Heart right ventricle (tissue), 16 donors: ENCODE measurements at regions of chr14 and their contacts with region 1.

Region 1: DNA sequence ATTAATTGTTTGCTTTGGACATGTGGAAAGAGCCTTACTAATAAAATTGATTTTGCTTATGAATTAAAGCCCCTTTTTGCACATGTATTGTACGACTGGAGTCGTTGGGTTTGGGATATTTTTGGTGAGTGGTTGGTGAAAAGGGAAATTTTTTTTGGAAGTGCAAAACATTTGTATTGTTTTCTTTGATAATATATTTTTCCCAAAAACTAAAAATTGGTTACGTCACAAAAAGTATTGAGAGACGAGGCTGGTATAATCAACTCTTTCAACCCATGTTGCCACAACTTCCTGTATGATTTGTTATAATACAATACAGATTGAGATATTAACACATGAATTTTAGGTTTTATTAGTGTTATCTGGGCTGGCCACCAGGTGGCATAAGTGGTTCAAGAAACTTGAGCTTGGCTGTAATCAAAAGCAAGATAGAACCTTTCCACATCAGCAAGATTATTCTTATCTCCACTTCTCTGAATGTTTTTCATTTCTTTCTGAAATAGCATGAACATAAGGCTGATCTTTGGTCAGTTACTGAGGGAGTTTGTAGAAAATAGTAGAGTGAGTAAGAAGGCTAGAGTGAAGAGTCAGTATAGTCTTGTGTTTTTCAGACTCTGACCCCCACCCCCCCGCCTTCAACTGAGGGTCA is 8.7 kb downstream of the NGDN start:
- DNase-seq: peak in 1 of 2 donors; percentile 52
- ATAC-seq: peak in 2 of 8 donors; percentile 39 to 64
- H3K4me3 ChIP-seq: no peak overlapping the region
- H3K27ac ChIP-seq: no peak overlapping the region
- H3K4me1 ChIP-seq: peaks cover 0 to 5% (median 0%) of the 10 kb centered on the region in 9 donors
- H3K27me3 ChIP-seq: no peaks in the 10 kb centered on the region
- CTCF ChIP-seq: peak; percentile 54 to 78 (median 70)

Region 2: DNA sequence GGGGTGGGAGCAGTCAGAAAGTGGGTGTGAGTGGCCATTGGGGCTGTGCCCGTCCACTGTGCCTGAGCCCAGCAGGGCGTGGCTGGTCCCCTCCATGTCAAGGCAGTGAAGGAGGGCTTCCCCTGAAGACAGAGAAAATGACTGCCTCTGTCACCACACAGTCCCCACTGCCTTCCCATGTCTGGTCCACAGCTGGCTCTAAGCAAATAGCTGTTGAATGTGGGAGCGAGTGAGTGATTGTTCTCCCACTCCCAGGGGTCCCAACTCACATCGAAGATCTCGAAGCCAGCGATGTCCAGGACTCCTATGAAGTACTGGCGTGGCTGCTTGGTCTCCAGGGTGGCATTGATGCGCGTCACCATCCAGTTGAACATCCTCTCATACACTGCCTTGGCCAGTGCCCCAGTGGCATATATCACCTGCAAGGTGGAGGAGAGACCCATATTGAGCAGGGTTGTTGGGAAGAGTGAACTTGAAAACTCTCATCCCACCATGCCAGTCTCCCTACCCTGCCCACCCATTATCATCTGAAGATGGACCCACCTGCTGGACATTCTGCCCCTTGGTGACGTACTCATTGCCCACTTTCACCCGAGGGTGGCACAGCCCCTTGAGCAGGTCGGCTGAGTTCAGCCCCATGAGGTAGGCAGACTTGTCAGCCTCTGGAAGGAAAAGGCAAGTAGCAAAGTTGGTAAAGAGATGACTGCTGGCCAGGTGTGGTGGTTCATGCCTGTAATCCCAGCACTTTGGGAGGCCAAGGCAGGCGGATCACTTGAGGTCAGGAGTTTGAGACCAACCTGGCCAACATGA is 49.3 kb before region 1 on chr14:
- intact Hi-C with region 1: no loop called
- DNase-seq: peak in 1 of 2 donors; percentile 17
- ATAC-seq: peak in 5 of 8 donors; percentile 1 to 15 (median 7)
- H3K4me3 ChIP-seq: peak overlapping the region in 3 of 10 donors; percentile 3 to 58 (median 47)
- H3K27ac ChIP-seq: peak overlapping the region in 1 of 10 donors; percentile 96
- H3K4me1 ChIP-seq: peaks cover 0 to 3% (median 0%) of the 10 kb centered on the region in 9 donors
- H3K27me3 ChIP-seq: no peaks in the 10 kb centered on the region
- CTCF ChIP-seq: no peak

Region 3: GRCh38 chr14:23539248-23540140 is 61.3 kb after region 1 on chr14:
- intact Hi-C with region 1: loop called in 3 of 10 experiments (anchors 5 to 10 kb)
- DNase-seq: no peak
- ATAC-seq: peak in 7 of 8 donors; percentile 31 to 75 (median 57)
- H3K4me3 ChIP-seq: no peak overlapping the region
- H3K27ac ChIP-seq: no peak overlapping the region
- H3K4me1 ChIP-seq: peaks cover 0 to 11% (median under 1%) of the 10 kb centered on the region in 9 donors
- H3K27me3 ChIP-seq: no peaks in the 10 kb centered on the region
- CTCF ChIP-seq: peak; percentile 43 to 80 (median 71)

Region 4: DNA sequence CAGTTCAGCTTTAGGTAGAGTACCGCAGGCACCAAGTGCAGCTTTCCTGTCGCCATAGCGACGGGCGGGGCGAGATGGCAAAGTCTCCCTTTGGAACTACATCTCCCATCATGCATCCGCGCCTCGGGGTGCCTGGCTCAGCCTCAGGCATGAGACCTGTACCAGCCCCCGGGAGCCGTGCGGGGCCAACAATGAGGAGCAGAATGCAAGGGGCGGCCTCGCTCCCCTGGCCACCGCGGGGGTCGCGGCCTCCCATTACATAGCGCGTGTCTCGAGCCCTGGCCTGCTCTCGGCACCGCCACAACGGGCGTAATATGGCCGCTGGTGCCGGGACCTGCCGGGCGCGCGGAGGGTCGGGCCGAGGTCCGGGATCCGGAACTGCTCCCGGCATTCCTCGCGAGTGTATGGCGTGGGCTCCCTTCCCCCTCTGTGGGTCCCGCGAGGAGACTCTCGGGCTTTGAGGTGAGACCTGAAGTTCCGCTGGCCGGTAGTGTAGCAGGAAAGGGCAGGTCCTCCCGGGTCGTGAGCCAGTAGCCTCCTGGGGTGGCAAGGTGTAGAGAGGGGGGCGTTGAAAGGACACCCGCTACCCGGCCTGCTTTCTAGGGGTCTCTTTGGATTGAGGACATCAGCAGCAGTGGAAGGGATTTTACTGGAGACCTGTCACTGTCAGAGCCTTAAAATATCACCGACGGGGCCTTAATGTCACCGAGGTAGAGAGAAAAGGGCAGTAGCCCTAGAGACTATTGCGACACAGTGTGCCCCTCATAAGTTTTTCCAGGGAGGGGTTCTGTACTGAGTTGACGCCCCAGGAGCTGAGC is 77.9 kb after region 1 on chr14 and contains the start of gene THTPA:
- intact Hi-C with region 1: loop called in 5 of 10 experiments (anchors 1 to 5 kb)
- DNase-seq: peak; percentile 92 to 93
- ATAC-seq: peak; percentile 93 to 96 (median 95)
- H3K4me3 ChIP-seq: peak within 1 kb of the TSS; percentile 58 to 93 (median 82)
- H3K27ac ChIP-seq: peak within 1 kb of the TSS; percentile 93 to 100 (median 97)
- H3K4me1 ChIP-seq: peaks cover 5 to 34% (median 26%) of the 10 kb centered on the region in 9 donors
- H3K27me3 ChIP-seq: no peaks in the 10 kb centered on the region
- CTCF ChIP-seq: no peak
- total RNA-seq, gene THTPA: 15.8 to 27.9 (median 18.0) TPM

Region 5: DNA sequence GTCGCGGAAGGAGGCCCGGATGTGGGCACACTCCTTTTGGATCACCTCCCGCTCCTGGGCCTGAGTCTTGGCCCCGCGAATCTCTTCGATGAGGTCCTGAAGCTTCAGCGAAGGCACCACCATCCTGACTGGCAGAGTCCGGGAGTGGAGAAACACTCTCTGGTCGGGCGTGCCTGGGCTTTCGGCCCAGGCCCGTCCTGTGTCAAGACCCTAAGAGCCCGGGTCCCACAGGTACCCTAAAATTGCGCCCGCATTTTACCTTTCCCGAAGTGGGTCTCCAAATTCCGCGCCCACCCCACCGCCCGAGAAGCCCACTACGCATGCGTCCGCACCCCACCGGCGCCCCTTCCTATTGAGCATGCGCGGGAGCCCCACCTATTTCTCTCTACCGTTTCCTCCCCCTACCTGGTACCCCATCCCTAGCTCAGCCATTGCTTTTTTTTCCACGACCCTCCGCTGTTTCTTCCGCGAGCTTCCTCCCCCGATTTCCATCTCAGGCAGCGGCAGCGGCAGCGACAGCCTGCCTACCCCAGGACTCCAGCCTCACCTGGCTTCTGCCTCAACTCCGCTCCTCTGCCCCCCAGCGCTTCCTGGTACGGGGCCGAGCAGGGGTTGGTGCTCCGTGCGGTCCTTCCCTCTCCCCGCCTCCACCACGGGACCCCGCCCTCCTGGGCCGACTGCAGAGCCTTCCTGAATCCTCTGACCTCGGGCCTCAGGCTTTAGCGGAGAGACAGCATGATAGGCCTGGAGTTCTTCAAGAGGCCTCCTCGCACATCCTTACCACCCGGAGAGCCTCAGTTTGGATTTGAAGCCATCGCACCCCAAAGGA is 89.2 kb after region 1 on chr14 and contains the start of gene AP1G2:
- intact Hi-C with region 1: loop called in 8 of 10 experiments (anchors 1 to 5 kb)
- DNase-seq: peak; percentile 84 to 85
- ATAC-seq: peak; percentile 59 to 89 (median 82)
- H3K4me3 ChIP-seq: peak within 1 kb of the TSS; percentile 59 to 78 (median 64)
- H3K27ac ChIP-seq: peak within 1 kb of the TSS in 8 of 10 donors; percentile 61 to 90 (median 71)
- H3K4me1 ChIP-seq: peaks cover 2 to 34% (median 16%) of the 10 kb centered on the region in 9 donors
- H3K27me3 ChIP-seq: peaks cover 0 to 12% (median 0%) of the 10 kb centered on the region in 7 donors
- CTCF ChIP-seq: no peak
- total RNA-seq, gene AP1G2: 6.6 to 19.9 (median 9.9) TPM